ENCODE measurements at regions of chr5 and their contacts with region 1.

Region 1: DNA sequence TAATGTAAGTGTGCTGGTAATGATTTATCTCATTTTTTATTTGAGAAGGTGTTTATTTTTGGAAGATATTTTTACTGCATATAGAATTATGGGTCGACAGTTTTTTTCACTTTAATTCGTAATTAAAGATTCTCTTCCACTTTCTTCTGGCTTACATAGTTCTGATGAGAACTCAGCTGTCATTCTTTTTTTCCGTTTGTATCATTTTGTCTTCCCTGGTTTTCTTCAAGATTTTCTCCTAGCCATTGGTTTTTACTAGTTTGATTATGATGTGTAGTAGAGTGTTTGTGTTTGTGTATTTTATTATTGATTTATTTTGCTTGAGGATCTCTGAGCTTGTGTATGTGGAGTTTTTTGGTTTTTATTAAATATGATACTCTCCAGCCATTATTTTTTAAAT is 21.7 kb downstream of the SLF1 start:
- DNase-seq: no peak
- H3K4me3 ChIP-seq: no peak overlapping the region
- H3K27ac ChIP-seq: no peak overlapping the region
- H3K27me3 ChIP-seq: no peaks in the 10 kb centered on the region
- CTCF ChIP-seq: no peak

Region 2: DNA sequence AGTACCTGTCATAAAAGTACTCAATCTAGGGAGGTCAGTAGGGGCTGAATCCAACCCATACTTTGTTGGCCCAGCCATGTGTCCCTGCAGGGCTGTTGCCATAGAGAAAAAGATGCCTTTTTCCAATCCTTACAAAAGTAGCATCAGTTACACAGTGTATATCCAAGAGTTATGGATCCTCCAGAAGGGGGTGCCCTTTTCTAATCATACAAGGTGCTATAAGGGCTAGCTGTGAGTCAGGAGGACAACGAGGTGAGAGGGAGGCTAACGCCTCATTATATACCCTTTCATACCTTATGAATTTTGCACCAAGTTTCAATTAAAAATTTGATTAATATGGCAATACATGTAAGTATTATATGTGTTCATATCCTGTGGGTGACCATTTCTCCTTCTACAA is 26.6 kb before region 1 on chr5:
- CTCF ChIA-PET with region 1: interaction called, 3 read pairs
- POLR2A ChIA-PET with region 1: interaction called, 10 read pairs
- DNase-seq: no peak
- H3K4me3 ChIP-seq: no peak overlapping the region
- H3K27ac ChIP-seq: no peak overlapping the region
- H3K27me3 ChIP-seq: no peaks in the 10 kb centered on the region
- CTCF ChIP-seq: peak; percentile 27; the same call in 1 of the 2 replicates